B cell (primary cell): ENCODE measurements at regions of chr17 and their contacts with region 1.

Region 1: GRCh38 chr17:57946798-57947358 is 8.3 kb downstream of the CUEDC1 start:
- DNase-seq: peak; percentile 75
- ATAC-seq: peak; percentile 88
- H3K4me3 ChIP-seq: peak overlapping the region; percentile 28 to 57 (median 50)
- H3K4me3 Mint-ChIP-seq: peak overlapping the region; percentile 96
- H3K27ac ChIP-seq: no peak overlapping the region
- H3K27ac Mint-ChIP-seq: peak overlapping the region; percentile 64
- H3K4me1 ChIP-seq: peaks cover 30 to 55% of the 10 kb centered on the region in 2 donors
- H3K4me1 Mint-ChIP-seq: peaks cover 50% of the 10 kb centered on the region
- H3K27me3 ChIP-seq: peaks cover 0 to 48% (median 20%) of the 10 kb centered on the region in 4 experiments
- H3K27me3 Mint-ChIP-seq: peaks cover 56% of the 10 kb centered on the region
- CTCF ChIP-seq: no peak

Region 2: GRCh38 chr17:57868007-57868909 is 78.6 kb before region 1 on chr17:
- CTCF ChIA-PET with region 1: no interaction called
- POLR2A ChIA-PET with region 1: no interaction called
- intact Hi-C with region 1: loop called (anchors 5 kb)
- DNase-seq: peak; percentile 79
- ATAC-seq: peak; percentile 91
- H3K4me3 ChIP-seq: no peak overlapping the region
- H3K4me3 Mint-ChIP-seq: peak overlapping the region; percentile 35
- H3K27ac ChIP-seq: no peak overlapping the region
- H3K27ac Mint-ChIP-seq: peak overlapping the region; percentile 71
- H3K4me1 ChIP-seq: peaks cover 26 to 27% of the 10 kb centered on the region in 2 donors
- H3K4me1 Mint-ChIP-seq: peaks cover 29% of the 10 kb centered on the region
- H3K27me3 ChIP-seq: peaks cover 0 to 28% (median 10%) of the 10 kb centered on the region in 4 experiments
- H3K27me3 Mint-ChIP-seq: peaks cover 17% of the 10 kb centered on the region
- CTCF ChIP-seq: peak; percentile 27